Gastrocnemius medialis (tissue), 4 donors: ENCODE measurements at regions of chr14 and their contacts with region 1.

Region 1: DNA sequence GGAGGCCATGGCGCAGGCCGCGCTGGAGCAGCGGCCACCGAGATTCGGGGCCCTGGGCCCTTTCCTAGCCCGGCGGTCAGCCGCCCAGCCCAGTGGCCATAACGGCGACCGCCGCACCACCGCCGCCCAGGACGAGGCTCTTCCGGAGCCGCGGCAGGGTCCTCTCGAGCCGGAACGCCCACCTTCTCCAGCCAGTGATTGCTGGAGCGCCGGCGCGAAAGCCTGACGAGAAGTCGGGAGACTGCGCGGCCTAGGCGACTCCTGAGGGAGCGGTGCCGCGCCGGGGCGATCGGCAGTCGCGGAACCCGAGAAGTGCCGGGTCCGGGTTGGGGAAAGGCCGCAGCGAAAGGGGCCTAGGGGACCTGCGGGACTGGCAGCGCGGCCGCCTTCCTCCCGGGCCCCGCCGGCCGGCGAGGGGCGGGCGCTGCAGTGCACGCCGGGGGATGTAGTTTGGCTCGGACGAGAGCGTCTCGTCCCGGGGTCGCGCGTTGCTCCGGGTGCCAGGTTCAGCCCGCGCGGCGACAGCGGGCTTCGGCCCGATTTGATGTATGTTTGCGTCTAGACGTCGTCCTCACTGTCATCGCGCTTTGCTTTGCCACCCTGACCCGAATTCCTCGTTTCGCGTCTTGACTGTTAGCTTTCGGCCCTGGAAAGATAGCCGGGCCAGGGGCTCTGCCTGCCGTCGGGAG is at the start of gene VTI1B:
- DNase-seq: peak; percentile 56 to 71
- ATAC-seq: peak; percentile 95 to 96
- H3K4me3 ChIP-seq: peak within 1 kb of the TSS; percentile 90 to 99 (median 92)
- H3K27ac ChIP-seq: peak within 1 kb of the TSS; percentile 92 to 99 (median 96)
- H3K4me1 ChIP-seq: peaks cover 34 to 40% of the 10 kb centered on the region in 2 donors
- H3K27me3 ChIP-seq: no peaks in the 10 kb centered on the region
- CTCF ChIP-seq: peak in 1 of 5 experiments; percentile 18
- POLR2A ChIP-seq: peak; percentile 59 to 77
- total RNA-seq, gene VTI1B: 33.7 to 69.1 (median 52.8) TPM

Region 2: DNA sequence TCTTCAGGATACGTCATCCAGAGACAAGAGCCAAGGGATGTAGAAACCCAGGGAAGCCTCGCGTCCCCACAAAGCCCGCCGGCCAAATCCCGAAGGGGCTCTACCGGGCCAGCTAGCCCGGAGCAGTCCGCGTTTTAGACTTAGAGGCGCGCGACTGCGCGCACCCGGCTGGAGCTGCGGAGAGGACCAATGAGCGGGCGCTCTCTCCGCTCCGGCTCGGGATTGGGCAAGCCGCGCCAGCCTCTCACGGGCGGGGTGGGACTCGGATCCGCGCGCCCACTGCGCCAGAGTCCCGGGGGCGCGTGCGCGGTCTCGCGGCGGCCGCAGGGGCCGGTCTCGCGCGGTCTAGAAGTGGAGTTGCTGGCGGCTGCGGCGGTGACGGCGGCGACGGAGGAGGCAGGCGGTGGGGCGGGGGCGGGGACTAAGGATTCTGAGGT is 433.6 kb before region 1 on chr14:
- in situ Hi-C with region 1: no loop called
- intact Hi-C with region 1: loop called (anchors 10 kb)
- DNase-seq: peak; percentile 95 to 98
- ATAC-seq: peak; percentile 86 to 88
- H3K4me3 ChIP-seq: peak overlapping the region; percentile 85 to 95 (median 92)
- H3K27ac ChIP-seq: peak overlapping the region; percentile 94 to 99 (median 96)
- H3K4me1 ChIP-seq: peaks cover 8 to 22% of the 10 kb centered on the region in 2 donors
- H3K27me3 ChIP-seq: no peaks in the 10 kb centered on the region
- CTCF ChIP-seq: no peak
- POLR2A ChIP-seq: peak; percentile 86 to 88

Region 3: DNA sequence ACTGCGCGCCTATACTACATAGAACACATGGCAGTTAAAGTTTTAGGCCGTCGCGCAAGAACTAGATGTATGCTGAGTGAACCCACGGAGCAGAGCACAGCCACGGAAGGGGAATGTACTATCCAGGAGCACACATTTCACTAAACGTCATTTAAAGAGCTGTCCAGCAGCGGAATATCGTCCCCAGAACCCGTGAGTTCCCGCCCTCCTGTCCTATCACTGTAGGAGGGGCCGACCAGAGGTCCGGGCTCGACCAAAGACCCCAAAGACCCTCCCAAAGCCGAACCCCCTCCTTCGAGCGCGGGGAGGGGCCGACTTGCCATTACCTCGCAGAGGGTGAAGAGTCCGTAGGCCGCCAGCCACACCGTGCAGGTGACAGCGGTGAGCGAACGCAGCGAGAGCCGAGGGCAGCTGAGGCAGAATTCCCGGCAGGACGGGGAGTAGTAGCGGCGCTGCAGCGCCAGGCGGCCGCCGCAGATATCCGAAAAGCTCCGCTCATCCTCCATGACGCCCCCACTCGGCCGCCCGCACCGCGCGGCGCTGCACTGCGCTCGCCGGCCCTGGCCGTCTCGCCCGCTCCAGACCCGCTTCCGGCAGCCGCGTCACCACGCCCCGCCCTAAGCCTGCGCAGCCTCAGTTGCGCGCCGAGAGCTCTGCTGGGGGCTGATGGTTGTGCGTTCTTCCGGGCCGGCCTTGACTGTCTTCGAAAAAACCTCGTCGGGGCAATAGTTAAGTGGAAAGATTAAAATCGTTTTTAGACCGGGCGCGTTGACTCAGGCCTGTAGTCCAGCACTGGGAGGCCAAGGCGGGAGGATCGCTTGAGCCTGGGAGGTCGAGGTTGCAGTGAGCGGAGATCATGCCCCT is 74.7 kb before region 1 on chr14 and contains the start of gene PIGH:
- in situ Hi-C with region 1: no loop called
- intact Hi-C with region 1: loop called (anchors 1 kb)
- DNase-seq: peak; percentile 75 to 85
- ATAC-seq: peak; percentile 92 to 93
- H3K4me3 ChIP-seq: peak within 1 kb of the TSS; percentile 92 to 98 (median 95)
- H3K27ac ChIP-seq: peak within 1 kb of the TSS; percentile 89 to 95 (median 92)
- H3K4me1 ChIP-seq: peaks cover 5 to 13% of the 10 kb centered on the region in 2 donors
- H3K27me3 ChIP-seq: no peaks in the 10 kb centered on the region
- CTCF ChIP-seq: peak; percentile 58 to 70 (median 67)
- POLR2A ChIP-seq: peak; percentile 85 to 86
- total RNA-seq, gene PIGH: 27.8 to 48.5 (median 35.3) TPM

Region 4: DNA sequence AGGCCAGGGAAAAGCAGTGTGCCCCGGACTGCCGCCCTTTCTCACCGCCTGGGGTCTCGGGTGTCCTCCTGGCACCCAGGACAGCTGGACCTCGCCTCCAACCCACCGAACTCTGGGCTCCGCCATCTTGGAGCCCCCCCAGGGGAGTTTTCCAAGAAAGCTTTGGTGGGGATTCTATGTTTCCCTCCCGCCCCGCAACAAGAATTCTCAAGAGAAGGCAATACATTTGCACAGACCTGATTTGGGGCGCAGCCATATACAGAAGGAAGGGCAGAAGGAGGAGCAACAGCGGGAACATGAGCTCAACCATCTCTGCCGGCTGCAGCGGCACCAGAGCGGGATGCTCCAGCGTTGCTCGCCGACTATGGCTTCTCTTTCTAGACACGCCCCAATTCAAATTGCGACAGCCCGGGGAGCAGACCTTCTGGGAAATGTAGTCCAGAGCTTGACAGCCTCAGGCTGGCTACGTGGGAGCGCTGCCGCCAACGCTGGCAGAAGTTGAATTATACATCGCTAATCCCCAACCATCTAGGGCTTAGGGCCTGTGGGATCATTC is 20.8 kb after region 1 on chr14 and contains the start of gene RDH11:
- in situ Hi-C with region 1: no loop called
- intact Hi-C with region 1: loop called (anchors 2 kb)
- DNase-seq: peak; percentile 73 to 77
- ATAC-seq: peak; percentile 100
- H3K4me3 ChIP-seq: peak within 1 kb of the TSS; percentile 74 to 87 (median 82)
- H3K27ac ChIP-seq: peak within 1 kb of the TSS; percentile 61 to 69 (median 66)
- H3K4me1 ChIP-seq: peaks cover 6% of the 10 kb centered on the region in 2 donors
- H3K27me3 ChIP-seq: no peaks in the 10 kb centered on the region
- CTCF ChIP-seq: no peak
- POLR2A ChIP-seq: peak; percentile 45 to 63
- total RNA-seq, gene RDH11: 6.6 to 8.3 (median 7.5) TPM

Region 5: GRCh38 chr14:67766172-67766680 is 91.6 kb after region 1 on chr14:
- in situ Hi-C with region 1: no loop called
- intact Hi-C with region 1: no loop called
- DNase-seq: no peak
- ATAC-seq: no peak
- H3K4me3 ChIP-seq: no peak overlapping the region
- H3K27ac ChIP-seq: no peak overlapping the region
- H3K4me1 ChIP-seq: no peaks in the 10 kb centered on the region
- H3K27me3 ChIP-seq: no peaks in the 10 kb centered on the region
- CTCF ChIP-seq: no peak
- POLR2A ChIP-seq: no peak